ENCODE measurements at regions of chr4 and their contacts with region 1.

Region 1: GRCh38 chr4:1167247-1167949 is 5.0 kb downstream of the SPON2 start:
- DNase-seq: peak; percentile 91
- ATAC-seq: peak; percentile 96
- H3K4me3 ChIP-seq: peak overlapping the region; percentile 85
- H3K27ac ChIP-seq: peak overlapping the region; percentile 80
- H3K4me1 ChIP-seq: peaks cover 24% of the 10 kb centered on the region
- H3K27me3 ChIP-seq: peaks cover 0 to 9% of the 10 kb centered on the region in 2 experiments; a peak in 2 of 4 replicates
- CTCF ChIP-seq: peak; percentile 93 to 95 (median 94); a peak in 5 of 6 replicates
- EP300 ChIP-seq: no peak
- POLR2A ChIP-seq: peak; percentile 86
- RAD21 ChIP-seq: peak; percentile 76

Region 2: DNA sequence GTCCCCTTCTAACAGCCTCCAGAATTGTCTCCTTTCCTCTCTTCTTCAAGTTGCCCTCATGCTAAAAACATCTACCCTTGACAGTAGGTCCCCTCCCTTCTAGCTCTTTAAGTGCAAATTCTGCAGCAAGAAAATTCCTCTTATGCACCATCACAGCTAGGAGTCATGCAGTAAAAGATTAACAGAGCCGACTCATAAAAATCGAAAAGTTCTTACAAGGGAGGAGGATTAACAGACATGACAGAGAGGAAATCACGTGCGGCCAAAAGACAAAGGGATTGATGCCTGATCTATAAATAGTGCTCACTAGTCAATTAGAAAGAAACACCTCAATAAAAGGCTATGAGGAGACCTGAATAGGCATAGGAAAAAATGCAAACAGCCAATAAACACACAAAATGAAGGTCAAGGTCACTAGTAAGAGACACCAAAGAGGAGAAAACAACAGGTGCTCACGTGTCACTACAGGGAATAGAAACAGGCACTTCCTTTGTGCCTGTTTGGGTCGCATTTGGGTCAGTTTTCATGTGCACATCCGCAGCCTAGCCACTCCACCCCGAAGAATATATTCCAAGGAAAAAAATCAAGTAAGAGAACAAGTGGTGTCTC is 57.4 kb before region 1 on chr4:
- CTCF ChIA-PET with region 1: no interaction called
- POLR2A ChIA-PET with region 1: no interaction called
- RAD21 ChIA-PET with region 1: no interaction called
- SMC1A ChIA-PET with region 1: no interaction called
- in situ Hi-C with region 1: no loop called
- intact Hi-C with region 1: no loop called
- DNase-seq: no peak
- ATAC-seq: no peak
- H3K4me3 ChIP-seq: no peak overlapping the region
- H3K27ac ChIP-seq: no peak overlapping the region
- H3K4me1 ChIP-seq: no peaks in the 10 kb centered on the region
- H3K27me3 ChIP-seq: peaks cover 0 to 2% of the 10 kb centered on the region in 2 experiments; a peak in 1 of 4 replicates
- CTCF ChIP-seq: no peak
- EP300 ChIP-seq: no peak
- POLR2A ChIP-seq: no peak
- RAD21 ChIP-seq: no peak

Region 3: GRCh38 chr4:1154523-1155182 is 12.7 kb before region 1 on chr4:
- CTCF ChIA-PET with region 1: interaction called, 17 read pairs
- POLR2A ChIA-PET with region 1: no interaction called
- RAD21 ChIA-PET with region 1: no interaction called
- SMC1A ChIA-PET with region 1: no interaction called
- in situ Hi-C with region 1: no loop called
- intact Hi-C with region 1: no loop called
- DNase-seq: no peak
- ATAC-seq: no peak
- H3K4me3 ChIP-seq: no peak overlapping the region
- H3K27ac ChIP-seq: no peak overlapping the region
- H3K4me1 ChIP-seq: peaks cover 6% of the 10 kb centered on the region
- H3K27me3 ChIP-seq: peaks cover 0 to 2% of the 10 kb centered on the region in 2 experiments; a peak in 2 of 4 replicates
- CTCF ChIP-seq: no peak
- EP300 ChIP-seq: no peak
- POLR2A ChIP-seq: no peak
- RAD21 ChIP-seq: no peak

Region 4: DNA sequence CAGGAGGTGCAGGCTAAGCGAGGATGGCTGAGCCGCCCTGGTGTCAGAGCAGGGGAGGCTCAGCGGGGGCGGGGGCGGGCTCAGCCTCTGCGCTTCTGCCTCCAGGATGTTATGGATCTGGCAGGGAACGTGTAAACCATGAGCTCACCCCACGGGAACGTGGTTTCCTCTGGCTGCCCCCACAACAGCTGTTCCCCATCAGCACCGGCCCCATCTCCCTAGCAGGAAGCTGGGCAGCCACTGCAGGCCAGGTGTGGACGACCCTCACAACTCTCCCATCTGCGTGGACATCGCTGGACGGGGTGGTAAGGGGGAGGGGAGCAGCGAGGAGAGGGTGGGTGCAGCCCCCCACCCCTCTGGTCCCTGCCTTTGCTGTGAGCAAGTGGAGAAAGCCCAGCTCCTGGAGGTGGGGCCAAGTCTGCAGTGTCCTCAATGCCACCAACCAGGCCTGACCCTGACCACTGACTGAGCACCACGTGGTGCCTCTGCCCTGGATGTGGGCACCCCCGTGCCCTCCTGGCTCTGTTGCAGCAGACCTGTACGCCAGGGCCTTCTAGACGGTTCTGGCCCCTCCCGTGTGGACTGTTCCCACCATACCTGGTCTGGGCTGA is 33.1 kb after region 1 on chr4:
- CTCF ChIA-PET with region 1: interaction called, 9 read pairs
- POLR2A ChIA-PET with region 1: no interaction called
- RAD21 ChIA-PET with region 1: interaction called, 9 read pairs
- SMC1A ChIA-PET with region 1: interaction called, 7 read pairs
- in situ Hi-C with region 1: no loop called
- intact Hi-C with region 1: loop called (anchors 1 kb)
- DNase-seq: no peak
- ATAC-seq: peak; percentile 41
- H3K4me3 ChIP-seq: peak overlapping the region; percentile 75
- H3K27ac ChIP-seq: peak overlapping the region; percentile 77
- H3K4me1 ChIP-seq: peaks cover 38% of the 10 kb centered on the region
- H3K27me3 ChIP-seq: no peaks in the 10 kb centered on the region
- CTCF ChIP-seq: no peak
- EP300 ChIP-seq: no peak
- POLR2A ChIP-seq: no peak
- RAD21 ChIP-seq: no peak

Region 5: DNA sequence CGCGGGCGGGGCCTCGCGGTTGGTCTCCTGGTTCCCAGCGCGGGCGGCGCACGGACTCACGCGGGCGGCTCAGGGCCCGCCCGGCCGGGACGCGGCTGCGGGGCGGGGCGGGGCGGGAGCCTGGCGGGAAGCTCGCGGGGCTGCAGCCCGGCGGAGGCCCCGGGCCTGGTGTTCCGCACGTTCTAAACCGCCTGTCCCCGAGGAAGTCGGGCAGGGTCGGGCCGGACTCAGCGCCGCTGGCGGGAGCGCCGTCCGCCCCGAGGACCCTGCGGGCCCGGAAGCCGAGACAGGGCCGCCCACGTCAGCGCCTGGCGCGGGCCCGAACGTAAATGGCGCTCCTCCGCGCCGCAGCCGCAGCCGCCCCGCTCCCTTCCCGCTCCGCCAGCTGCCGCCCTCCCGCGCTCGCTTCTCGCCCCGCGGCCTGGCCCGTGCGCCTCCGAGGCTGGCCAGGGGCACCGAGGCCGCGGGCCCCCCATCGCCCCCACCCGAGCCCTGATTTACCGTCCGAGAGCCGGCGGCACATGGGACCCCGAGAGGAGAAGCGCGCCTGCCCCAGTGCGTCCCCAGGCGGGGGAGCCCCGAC is 81.8 kb after region 1 on chr4:
- CTCF ChIA-PET with region 1: interaction called, 4 read pairs
- POLR2A ChIA-PET with region 1: interaction called, 3 read pairs
- RAD21 ChIA-PET with region 1: interaction called, 6 read pairs
- SMC1A ChIA-PET with region 1: interaction called, 3 read pairs
- in situ Hi-C with region 1: no loop called
- intact Hi-C with region 1: loop called (anchors 2 kb)
- DNase-seq: no peak
- ATAC-seq: peak; percentile 57
- H3K4me3 ChIP-seq: peak overlapping the region; percentile 83
- H3K27ac ChIP-seq: peak overlapping the region; percentile 92
- H3K4me1 ChIP-seq: peaks cover 24% of the 10 kb centered on the region
- H3K27me3 ChIP-seq: no peaks in the 10 kb centered on the region
- CTCF ChIP-seq: no peak
- EP300 ChIP-seq: no peak
- POLR2A ChIP-seq: no peak
- RAD21 ChIP-seq: no peak

Region 6: GRCh38 chr4:1695913-1696312 is 528.5 kb after region 1 on chr4:
- CTCF ChIA-PET with region 1: no interaction called
- POLR2A ChIA-PET with region 1: no interaction called
- RAD21 ChIA-PET with region 1: no interaction called
- SMC1A ChIA-PET with region 1: no interaction called
- in situ Hi-C with region 1: no loop called
- intact Hi-C with region 1: no loop called
- DNase-seq: no peak
- ATAC-seq: no peak
- H3K4me3 ChIP-seq: no peak overlapping the region
- H3K27ac ChIP-seq: no peak overlapping the region
- H3K4me1 ChIP-seq: no peaks in the 10 kb centered on the region
- H3K27me3 ChIP-seq: no peaks in the 10 kb centered on the region
- CTCF ChIP-seq: no peak
- EP300 ChIP-seq: no peak
- POLR2A ChIP-seq: no peak
- RAD21 ChIP-seq: no peak

Measured in GM12878 (cell line).